CD8-positive, alpha-beta T cell (primary cell): ENCODE measurements at regions of chr7 and their contacts with region 1.

Region 1: GRCh38 chr7:149811221-149811620 is 27.0 kb upstream of the ZNF862 start:
- DNase-seq: no peak
- ATAC-seq: no peak
- H3K4me3 ChIP-seq: no peak overlapping the region
- H3K4me3 Mint-ChIP-seq: no peak overlapping the region
- H3K27ac ChIP-seq: no peak overlapping the region
- H3K27ac Mint-ChIP-seq: no peak overlapping the region
- H3K4me1 ChIP-seq: peaks cover 4% of the 10 kb centered on the region
- H3K4me1 Mint-ChIP-seq: peaks cover 11% of the 10 kb centered on the region
- H3K27me3 ChIP-seq: no peaks in the 10 kb centered on the region
- H3K27me3 Mint-ChIP-seq: no peaks in the 10 kb centered on the region
- CTCF ChIP-seq: no peak

Region 2: DNA sequence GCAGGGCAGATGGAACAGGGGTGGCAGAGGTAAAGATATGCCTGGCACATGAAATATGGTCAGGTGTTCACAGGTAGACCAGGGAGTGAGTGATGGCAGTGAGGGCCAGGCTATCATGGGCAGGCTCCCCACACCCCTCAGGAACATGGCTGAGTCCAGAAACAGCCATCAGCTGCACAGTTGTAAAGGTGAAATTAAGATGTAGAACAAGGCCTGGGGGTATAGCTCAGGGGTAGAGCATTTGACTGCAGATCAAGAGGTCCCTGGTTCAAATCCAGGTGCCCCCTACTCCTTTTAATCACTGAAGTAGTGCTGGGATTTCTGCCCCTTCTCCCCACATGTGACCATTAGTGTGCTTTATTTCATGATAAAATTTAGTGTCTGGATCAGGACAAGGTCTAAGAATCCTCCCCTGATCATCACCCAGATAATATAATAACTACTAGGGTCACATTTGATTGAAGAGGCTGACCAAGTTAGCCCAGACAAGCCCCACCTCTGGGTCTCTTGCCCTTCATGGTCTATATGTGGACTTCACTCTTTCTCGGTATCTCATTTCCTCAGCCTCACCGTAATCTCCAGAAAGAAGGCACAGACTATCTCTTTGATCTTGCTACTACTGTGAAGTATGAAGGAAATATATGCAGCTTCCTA is 480.2 kb before region 1 on chr7:
- CTCF ChIA-PET with region 1: no interaction called
- POLR2A ChIA-PET with region 1: no interaction called
- intact Hi-C with region 1: loop called in 1 of 2 experiments (anchors 10 kb)
- DNase-seq: no peak
- ATAC-seq: no peak
- H3K4me3 ChIP-seq: no peak overlapping the region
- H3K4me3 Mint-ChIP-seq: no peak overlapping the region
- H3K27ac ChIP-seq: no peak overlapping the region
- H3K27ac Mint-ChIP-seq: no peak overlapping the region
- H3K4me1 ChIP-seq: no peaks in the 10 kb centered on the region
- H3K4me1 Mint-ChIP-seq: no peaks in the 10 kb centered on the region
- H3K27me3 ChIP-seq: peaks cover 2 to 3% of the 10 kb centered on the region in 2 experiments
- H3K27me3 Mint-ChIP-seq: peaks cover 14% of the 10 kb centered on the region
- CTCF ChIP-seq: no peak

Region 3: GRCh38 chr7:149799397-149800171 is 11.6 kb before region 1 on chr7:
- CTCF ChIA-PET with region 1: interaction called, 12 read pairs
- POLR2A ChIA-PET with region 1: no interaction called
- intact Hi-C with region 1: no loop called
- DNase-seq: peak; percentile 36 to 77 (median 70)
- ATAC-seq: peak; percentile 85
- H3K4me3 ChIP-seq: no peak overlapping the region
- H3K4me3 Mint-ChIP-seq: no peak overlapping the region
- H3K27ac ChIP-seq: no peak overlapping the region
- H3K27ac Mint-ChIP-seq: no peak overlapping the region
- H3K4me1 ChIP-seq: no peaks in the 10 kb centered on the region
- H3K4me1 Mint-ChIP-seq: no peaks in the 10 kb centered on the region
- H3K27me3 ChIP-seq: no peaks in the 10 kb centered on the region
- H3K27me3 Mint-ChIP-seq: no peaks in the 10 kb centered on the region
- CTCF ChIP-seq: peak; percentile 57

Region 4: GRCh38 chr7:149883452-149883861 is 72.2 kb after region 1 on chr7:
- CTCF ChIA-PET with region 1: interaction called, 23 read pairs
- POLR2A ChIA-PET with region 1: no interaction called
- intact Hi-C with region 1: no loop called
- DNase-seq: peak in 6 of 9 experiments; percentile 52 to 72 (median 61)
- ATAC-seq: peak; percentile 81
- H3K4me3 ChIP-seq: no peak overlapping the region
- H3K4me3 Mint-ChIP-seq: no peak overlapping the region
- H3K27ac ChIP-seq: no peak overlapping the region
- H3K27ac Mint-ChIP-seq: no peak overlapping the region
- H3K4me1 ChIP-seq: peaks cover 8% of the 10 kb centered on the region
- H3K4me1 Mint-ChIP-seq: peaks cover 19% of the 10 kb centered on the region
- H3K27me3 ChIP-seq: no peaks in the 10 kb centered on the region
- H3K27me3 Mint-ChIP-seq: no peaks in the 10 kb centered on the region
- CTCF ChIP-seq: peak; percentile 56